CD4-positive, alpha-beta T cell (primary cell): ENCODE measurements at regions of chr16 and their contacts with region 1.

Region 1: GRCh38 chr16:82169861-82170845 is at the start of gene MPHOSPH6:
- DNase-seq: peak; percentile 83 to 97 (median 88)
- ATAC-seq: peak; percentile 92
- H3K4me3 ChIP-seq: peak within 1 kb of the TSS; percentile 82
- H3K4me3 Mint-ChIP-seq: peak within 1 kb of the TSS; percentile 98
- H3K27ac ChIP-seq: peak within 1 kb of the TSS; percentile 71 to 76
- H3K27ac Mint-ChIP-seq: peak within 1 kb of the TSS; percentile 97
- H3K4me1 ChIP-seq: peaks cover 26% of the 10 kb centered on the region
- H3K4me1 Mint-ChIP-seq: peaks cover 35% of the 10 kb centered on the region
- H3K27me3 ChIP-seq: peaks cover 0 to 4% of the 10 kb centered on the region in 2 experiments
- H3K27me3 Mint-ChIP-seq: peaks cover 22% of the 10 kb centered on the region
- CTCF ChIP-seq: no peak
- total RNA-seq, gene MPHOSPH6: 14.3 to 15.5 TPM

Region 2: GRCh38 chr16:80540516-80541272 is 1629.5 kb before region 1 on chr16 and contains the start of gene DYNLRB2:
- CTCF ChIA-PET with region 1: no interaction called
- POLR2A ChIA-PET with region 1: no interaction called
- intact Hi-C with region 1: loop called in 1 of 2 experiments (anchors 10 kb)
- DNase-seq: peak; percentile 85 to 97 (median 89)
- ATAC-seq: peak; percentile 91
- H3K4me3 ChIP-seq: peak within 1 kb of the TSS; percentile 62
- H3K4me3 Mint-ChIP-seq: peak within 1 kb of the TSS; percentile 93
- H3K27ac ChIP-seq: peak within 1 kb of the TSS; percentile 36 to 62
- H3K27ac Mint-ChIP-seq: peak within 1 kb of the TSS; percentile 94
- H3K4me1 ChIP-seq: peaks cover 11% of the 10 kb centered on the region
- H3K4me1 Mint-ChIP-seq: peaks cover 17% of the 10 kb centered on the region
- H3K27me3 ChIP-seq: no peaks in the 10 kb centered on the region
- H3K27me3 Mint-ChIP-seq: peaks cover 4% of the 10 kb centered on the region
- CTCF ChIP-seq: no peak
- total RNA-seq, gene DYNLRB2: 0.31 TPM in 1 of 2 experiments, not detected in the other

Region 3: DNA sequence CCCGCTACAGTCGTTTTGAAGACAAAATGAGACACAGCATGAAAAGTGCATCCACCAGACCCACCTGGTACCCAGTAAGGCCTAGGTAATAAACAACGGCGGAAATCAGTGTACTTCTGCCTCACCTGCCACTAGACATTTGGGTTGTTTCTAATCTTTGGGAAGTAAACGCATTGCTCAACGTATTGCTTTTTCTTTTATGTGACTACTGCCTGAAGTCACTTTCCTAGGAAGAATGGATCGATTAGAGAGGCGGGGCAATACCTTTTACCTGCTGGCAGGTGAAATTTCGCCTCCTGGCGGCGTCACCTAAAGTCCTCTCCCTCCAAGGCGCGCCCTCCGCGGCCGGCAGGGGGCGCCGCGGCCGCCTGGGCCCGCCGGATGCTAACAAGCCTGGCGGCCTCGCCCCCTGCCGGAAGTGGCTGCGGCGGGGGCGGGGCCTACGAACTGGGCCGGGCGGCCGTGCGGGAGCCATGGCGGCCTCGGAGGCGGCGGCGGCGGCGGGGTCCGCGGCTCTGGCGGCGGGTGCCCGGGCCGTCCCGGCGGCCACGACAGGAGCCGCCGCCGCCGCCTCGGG is 1134.7 kb before region 1 on chr16 and contains the start of gene ATMIN:
- CTCF ChIA-PET with region 1: no interaction called
- POLR2A ChIA-PET with region 1: no interaction called
- intact Hi-C with region 1: loop called in 1 of 2 experiments (anchors 10 kb)
- DNase-seq: peak; percentile 78 to 96 (median 88)
- ATAC-seq: peak; percentile 94
- H3K4me3 ChIP-seq: peak within 1 kb of the TSS; percentile 57
- H3K4me3 Mint-ChIP-seq: peak within 1 kb of the TSS; percentile 90
- H3K27ac ChIP-seq: no peak within 1 kb of the TSS
- H3K27ac Mint-ChIP-seq: peak within 1 kb of the TSS; percentile 73
- H3K4me1 ChIP-seq: peaks cover 30% of the 10 kb centered on the region
- H3K4me1 Mint-ChIP-seq: peaks cover 40% of the 10 kb centered on the region
- H3K27me3 ChIP-seq: no peaks in the 10 kb centered on the region
- H3K27me3 Mint-ChIP-seq: no peaks in the 10 kb centered on the region
- CTCF ChIP-seq: peak; percentile 84
- total RNA-seq, gene ATMIN: 29.9 to 31.7 TPM

Region 4: DNA sequence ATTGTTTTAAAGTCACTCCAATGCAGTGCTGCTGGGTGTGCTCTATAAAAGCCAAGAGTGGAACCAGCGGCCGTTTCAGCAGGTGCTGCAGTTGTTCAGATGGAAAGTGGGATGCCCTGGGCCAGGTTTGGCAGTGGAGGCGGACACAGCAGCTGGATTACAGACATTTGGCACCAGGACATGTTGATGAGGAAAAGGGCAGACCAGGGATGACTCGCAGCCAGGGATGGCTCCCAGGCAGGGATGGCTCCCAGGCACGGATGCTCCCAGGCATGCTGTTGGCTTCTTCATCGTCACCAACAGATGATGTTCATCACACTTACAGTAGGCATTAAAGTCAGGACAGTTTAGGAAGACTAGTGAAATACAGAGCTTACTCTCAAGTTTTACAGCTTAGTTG is 845.3 kb before region 1 on chr16:
- CTCF ChIA-PET with region 1: no interaction called
- POLR2A ChIA-PET with region 1: no interaction called
- intact Hi-C with region 1: loop called in 1 of 2 experiments (anchors 5 kb)
- DNase-seq: no peak
- ATAC-seq: no peak
- H3K4me3 ChIP-seq: no peak overlapping the region
- H3K4me3 Mint-ChIP-seq: no peak overlapping the region
- H3K27ac ChIP-seq: no peak overlapping the region
- H3K27ac Mint-ChIP-seq: no peak overlapping the region
- H3K4me1 ChIP-seq: no peaks in the 10 kb centered on the region
- H3K4me1 Mint-ChIP-seq: peaks cover 19% of the 10 kb centered on the region
- H3K27me3 ChIP-seq: no peaks in the 10 kb centered on the region
- H3K27me3 Mint-ChIP-seq: no peaks in the 10 kb centered on the region
- CTCF ChIP-seq: no peak

Region 5: DNA sequence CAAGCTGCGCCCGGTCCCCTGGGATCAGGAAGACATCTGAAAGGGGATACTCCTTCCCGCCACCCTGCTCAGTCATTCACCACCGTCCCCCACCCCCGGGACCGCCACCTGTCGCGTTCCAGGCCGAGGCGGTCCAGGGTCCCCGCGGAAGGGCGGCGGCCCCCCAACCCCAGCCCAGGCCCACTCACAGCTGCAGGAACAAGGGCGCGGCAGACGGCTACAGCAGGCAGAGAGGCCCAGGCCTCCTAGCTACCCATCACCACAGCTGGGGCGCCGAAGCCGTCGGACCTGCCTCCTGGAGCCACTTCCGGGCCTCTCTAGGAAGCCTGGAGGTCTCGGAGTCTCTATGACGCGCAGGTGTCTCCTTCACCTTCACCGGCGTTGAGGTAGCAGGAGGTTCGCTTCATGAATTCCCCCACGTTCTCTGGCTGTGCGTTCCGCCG is 158.9 kb before region 1 on chr16 and contains the start of gene SDR42E1:
- CTCF ChIA-PET with region 1: no interaction called
- POLR2A ChIA-PET with region 1: interaction called, 7 read pairs
- intact Hi-C with region 1: loop called in 1 of 2 experiments (anchors 5 kb)
- DNase-seq: peak; percentile 22 to 84 (median 66)
- ATAC-seq: peak; percentile 97
- H3K4me3 ChIP-seq: peak within 1 kb of the TSS; percentile 63
- H3K4me3 Mint-ChIP-seq: peak within 1 kb of the TSS; percentile 92
- H3K27ac ChIP-seq: no peak within 1 kb of the TSS
- H3K27ac Mint-ChIP-seq: peak within 1 kb of the TSS; percentile 90
- H3K4me1 ChIP-seq: peaks cover 20% of the 10 kb centered on the region
- H3K4me1 Mint-ChIP-seq: peaks cover 29% of the 10 kb centered on the region
- H3K27me3 ChIP-seq: peaks cover 0 to 6% of the 10 kb centered on the region in 2 experiments
- H3K27me3 Mint-ChIP-seq: peaks cover 20% of the 10 kb centered on the region
- CTCF ChIP-seq: no peak
- total RNA-seq, gene SDR42E1: 4.5 to 7.6 TPM

Region 6: GRCh38 chr16:82192665-82193064 is 22.5 kb after region 1 on chr16:
- CTCF ChIA-PET with region 1: no interaction called
- POLR2A ChIA-PET with region 1: interaction called, 10 read pairs
- intact Hi-C with region 1: no loop called
- DNase-seq: peak in 4 of 14 experiments; percentile 4 to 70 (median 61)
- ATAC-seq: peak; percentile 75
- H3K4me3 ChIP-seq: no peak overlapping the region
- H3K4me3 Mint-ChIP-seq: no peak overlapping the region
- H3K27ac ChIP-seq: peak overlapping the region in 1 of 2 donors; percentile 7
- H3K27ac Mint-ChIP-seq: peak overlapping the region; percentile 45
- H3K4me1 ChIP-seq: peaks cover 3% of the 10 kb centered on the region
- H3K4me1 Mint-ChIP-seq: peaks cover 12% of the 10 kb centered on the region
- H3K27me3 ChIP-seq: no peaks in the 10 kb centered on the region
- H3K27me3 Mint-ChIP-seq: no peaks in the 10 kb centered on the region
- CTCF ChIP-seq: no peak

Region 7: GRCh38 chr16:82329485-82330180 is 159.5 kb after region 1 on chr16:
- CTCF ChIA-PET with region 1: no interaction called
- POLR2A ChIA-PET with region 1: no interaction called
- intact Hi-C with region 1: no loop called
- DNase-seq: no peak
- ATAC-seq: no peak
- H3K4me3 ChIP-seq: no peak overlapping the region
- H3K4me3 Mint-ChIP-seq: no peak overlapping the region
- H3K27ac ChIP-seq: no peak overlapping the region
- H3K27ac Mint-ChIP-seq: no peak overlapping the region
- H3K4me1 ChIP-seq: no peaks in the 10 kb centered on the region
- H3K4me1 Mint-ChIP-seq: no peaks in the 10 kb centered on the region
- H3K27me3 ChIP-seq: no peaks in the 10 kb centered on the region
- H3K27me3 Mint-ChIP-seq: peaks cover 27% of the 10 kb centered on the region
- CTCF ChIP-seq: no peak

Region 8: GRCh38 chr16:82653550-82654511 is 483.7 kb after region 1 on chr16:
- CTCF ChIA-PET with region 1: no interaction called
- POLR2A ChIA-PET with region 1: no interaction called
- intact Hi-C with region 1: loop called (anchors 10 kb)
- DNase-seq: peak in 13 of 14 experiments; percentile 5 to 83 (median 28)
- ATAC-seq: peak; percentile 62
- H3K4me3 ChIP-seq: no peak overlapping the region
- H3K4me3 Mint-ChIP-seq: peak overlapping the region; percentile 52
- H3K27ac ChIP-seq: peak overlapping the region; percentile 71 to 80
- H3K27ac Mint-ChIP-seq: peak overlapping the region; percentile 86
- H3K4me1 ChIP-seq: peaks cover 77% of the 10 kb centered on the region
- H3K4me1 Mint-ChIP-seq: peaks cover 99% of the 10 kb centered on the region
- H3K27me3 ChIP-seq: no peaks in the 10 kb centered on the region
- H3K27me3 Mint-ChIP-seq: no peaks in the 10 kb centered on the region
- CTCF ChIP-seq: no peak